PC-3 (cell line): ENCODE measurements at regions of chr19 and their contacts with region 1.

Region 1: GRCh38 chr19:4375164-4376027 is 25.0 kb downstream of the SH3GL1 start:
- DNase-seq: peak; percentile 95
- ATAC-seq: peak; percentile 35
- H3K4me3 ChIP-seq: peak overlapping the region; percentile 44
- H3K27ac ChIP-seq: peak overlapping the region; percentile 99
- H3K4me1 ChIP-seq: peaks cover 70% of the 10 kb centered on the region
- H3K27me3 ChIP-seq: no peaks in the 10 kb centered on the region
- CTCF ChIP-seq: peak; percentile 55

Region 2: DNA sequence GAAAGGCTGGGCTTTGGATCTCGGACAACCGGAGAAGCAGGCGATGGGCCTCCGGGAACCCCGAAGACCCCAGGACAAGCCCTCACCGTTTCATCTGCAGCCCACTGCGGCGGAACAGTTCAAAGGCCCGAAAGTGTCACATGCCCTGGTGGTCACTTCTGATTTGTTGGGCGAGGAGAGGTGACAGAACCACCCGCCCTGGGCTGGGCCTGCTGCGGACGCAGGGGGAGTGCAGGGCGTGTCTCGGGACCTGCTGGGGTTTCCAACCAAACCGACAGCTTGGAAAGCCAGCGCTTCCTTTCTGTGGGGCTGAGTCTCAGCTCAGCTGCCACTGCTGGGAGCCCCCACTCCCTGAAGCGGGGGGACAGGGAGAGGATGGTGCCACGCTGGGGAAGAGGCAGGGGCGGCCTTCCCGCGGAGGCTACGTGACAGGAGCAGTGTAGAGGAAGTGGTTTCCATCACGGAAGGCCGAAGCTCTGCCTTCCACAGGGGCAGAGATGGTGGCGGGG is 285.9 kb before region 1 on chr19:
- CTCF ChIA-PET with region 1: no interaction called
- POLR2A ChIA-PET with region 1: interaction called, 12 read pairs
- intact Hi-C with region 1: no loop called
- DNase-seq: no peak
- ATAC-seq: no peak
- H3K4me3 ChIP-seq: no peak overlapping the region
- H3K27ac ChIP-seq: no peak overlapping the region
- H3K4me1 ChIP-seq: peaks cover under 1% of the 10 kb centered on the region; the same call in 1 of the 2 replicates
- H3K27me3 ChIP-seq: no peaks in the 10 kb centered on the region
- CTCF ChIP-seq: no peak

Region 3: GRCh38 chr19:4272894-4273293 is 102.5 kb before region 1 on chr19:
- CTCF ChIA-PET with region 1: no interaction called
- POLR2A ChIA-PET with region 1: no interaction called
- intact Hi-C with region 1: no loop called
- DNase-seq: no peak
- ATAC-seq: no peak
- H3K4me3 ChIP-seq: no peak overlapping the region
- H3K27ac ChIP-seq: no peak overlapping the region
- H3K4me1 ChIP-seq: no peaks in the 10 kb centered on the region
- H3K27me3 ChIP-seq: no peaks in the 10 kb centered on the region
- CTCF ChIP-seq: no peak

Region 4: DNA sequence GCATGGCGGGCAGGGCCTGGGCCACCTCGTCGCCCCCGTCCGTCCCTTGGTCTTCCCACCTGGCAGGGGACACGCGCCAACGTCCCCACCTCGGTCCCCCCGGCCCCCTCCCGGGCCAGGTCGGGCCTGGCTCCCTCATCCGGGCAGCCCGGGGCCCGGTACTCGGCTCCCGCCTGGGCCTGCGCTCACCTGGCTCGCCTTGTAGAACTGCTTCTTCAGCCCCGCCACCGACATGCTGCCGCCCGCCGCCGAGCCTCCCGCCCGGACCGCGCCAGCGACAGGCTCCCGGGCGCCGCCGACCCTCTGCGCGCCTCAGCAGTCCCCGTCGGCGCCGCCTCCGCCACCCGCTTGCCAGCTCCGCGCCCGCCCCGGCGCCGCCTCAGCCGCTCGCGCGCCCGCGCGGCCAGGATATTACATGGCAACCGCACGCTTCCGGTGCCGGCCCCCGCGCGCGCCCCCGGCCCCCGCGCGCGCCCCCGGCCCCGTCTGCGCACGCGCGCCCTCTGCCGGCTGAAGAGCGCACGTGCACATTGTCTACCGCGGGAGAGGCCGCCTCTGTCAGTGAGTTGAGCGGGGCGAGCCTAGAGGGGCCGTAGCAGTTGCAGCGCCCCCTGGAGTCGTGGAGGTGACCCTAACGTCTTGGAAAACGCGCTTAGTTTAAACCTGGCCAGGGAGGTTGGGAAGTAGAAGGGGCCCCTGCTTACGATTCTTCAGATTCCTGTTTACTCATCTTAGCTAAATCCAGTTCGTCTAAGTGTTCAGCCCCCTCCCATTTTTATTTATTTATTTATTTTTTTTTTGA is 24.9 kb after region 1 on chr19 and contains the start of gene SH3GL1:
- CTCF ChIA-PET with region 1: interaction called, 11 read pairs
- POLR2A ChIA-PET with region 1: no interaction called
- intact Hi-C with region 1: loop called (anchors 1 kb)
- DNase-seq: peak; percentile 80
- ATAC-seq: peak; percentile 57
- H3K4me3 ChIP-seq: peak within 1 kb of the TSS; percentile 97
- H3K27ac ChIP-seq: no peak within 1 kb of the TSS
- H3K4me1 ChIP-seq: peaks cover 24% of the 10 kb centered on the region
- H3K27me3 ChIP-seq: no peaks in the 10 kb centered on the region
- CTCF ChIP-seq: peak; percentile 74
- total RNA-seq, gene SH3GL1: 59.8 and 71.1 TPM in 2 replicates

Region 5: GRCh38 chr19:4654437-4655361 is 279.3 kb after region 1 on chr19:
- CTCF ChIA-PET with region 1: interaction called, 16 read pairs
- POLR2A ChIA-PET with region 1: no interaction called
- intact Hi-C with region 1: no loop called
- DNase-seq: no peak
- ATAC-seq: no peak
- H3K4me3 ChIP-seq: no peak overlapping the region
- H3K27ac ChIP-seq: no peak overlapping the region
- H3K4me1 ChIP-seq: no peaks in the 10 kb centered on the region
- H3K27me3 ChIP-seq: no peaks in the 10 kb centered on the region
- CTCF ChIP-seq: no peak